A673 (cell line): ENCODE measurements at regions of chr3 and their contacts with region 1.

Region 1: GRCh38 chr3:128426128-128426921 is 40.4 kb downstream of the DNAJB8 start:
- DNase-seq: peak; percentile 58
- H3K4me3 ChIP-seq: no peak overlapping the region
- H3K27ac ChIP-seq: no peak overlapping the region
- H3K4me1 ChIP-seq: peaks cover 2% of the 10 kb centered on the region
- H3K27me3 ChIP-seq: no peaks in the 10 kb centered on the region
- CTCF ChIP-seq: peak; percentile 71

Region 2: DNA sequence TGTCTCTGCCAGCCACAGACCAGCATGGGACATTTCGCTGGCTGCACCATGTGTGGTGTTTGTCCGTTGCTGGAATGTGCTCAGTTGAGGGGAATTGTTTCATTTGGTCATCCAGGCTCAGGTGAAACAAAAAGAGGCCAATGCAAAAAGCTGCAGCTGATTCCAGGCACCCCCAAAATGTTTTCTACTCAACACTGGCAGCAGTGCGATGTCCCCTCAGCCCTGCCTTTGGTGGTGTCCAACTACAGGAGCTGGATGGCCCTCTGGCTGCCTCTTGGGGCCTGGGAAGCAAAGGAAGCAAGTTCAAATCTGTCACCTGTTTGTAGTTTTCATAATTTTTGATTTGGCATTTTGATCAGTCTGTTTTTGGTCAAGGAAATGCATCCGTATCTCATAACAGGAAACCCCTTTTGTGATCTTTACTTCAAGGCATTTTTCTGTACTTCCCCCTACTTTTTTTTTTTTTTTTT is 131.3 kb before region 1 on chr3:
- CTCF ChIA-PET with region 1: no interaction called
- POLR2A ChIA-PET with region 1: no interaction called
- intact Hi-C with region 1: no loop called
- DNase-seq: no peak
- H3K4me3 ChIP-seq: no peak overlapping the region
- H3K27ac ChIP-seq: no peak overlapping the region
- H3K4me1 ChIP-seq: peaks cover 9% of the 10 kb centered on the region
- H3K27me3 ChIP-seq: no peaks in the 10 kb centered on the region
- CTCF ChIP-seq: no peak

Region 3: GRCh38 chr3:128487813-128488635 is 61.7 kb after region 1 on chr3:
- CTCF ChIA-PET with region 1: interaction called, 3 read pairs
- POLR2A ChIA-PET with region 1: no interaction called
- intact Hi-C with region 1: loop called (anchors 5 kb)
- DNase-seq: peak; percentile 86
- H3K4me3 ChIP-seq: peak overlapping the region; percentile 81
- H3K27ac ChIP-seq: peak overlapping the region; percentile 60
- H3K4me1 ChIP-seq: peaks cover 19% of the 10 kb centered on the region
- H3K27me3 ChIP-seq: peaks cover 13% of the 10 kb centered on the region
- CTCF ChIP-seq: no peak

Region 4: DNA sequence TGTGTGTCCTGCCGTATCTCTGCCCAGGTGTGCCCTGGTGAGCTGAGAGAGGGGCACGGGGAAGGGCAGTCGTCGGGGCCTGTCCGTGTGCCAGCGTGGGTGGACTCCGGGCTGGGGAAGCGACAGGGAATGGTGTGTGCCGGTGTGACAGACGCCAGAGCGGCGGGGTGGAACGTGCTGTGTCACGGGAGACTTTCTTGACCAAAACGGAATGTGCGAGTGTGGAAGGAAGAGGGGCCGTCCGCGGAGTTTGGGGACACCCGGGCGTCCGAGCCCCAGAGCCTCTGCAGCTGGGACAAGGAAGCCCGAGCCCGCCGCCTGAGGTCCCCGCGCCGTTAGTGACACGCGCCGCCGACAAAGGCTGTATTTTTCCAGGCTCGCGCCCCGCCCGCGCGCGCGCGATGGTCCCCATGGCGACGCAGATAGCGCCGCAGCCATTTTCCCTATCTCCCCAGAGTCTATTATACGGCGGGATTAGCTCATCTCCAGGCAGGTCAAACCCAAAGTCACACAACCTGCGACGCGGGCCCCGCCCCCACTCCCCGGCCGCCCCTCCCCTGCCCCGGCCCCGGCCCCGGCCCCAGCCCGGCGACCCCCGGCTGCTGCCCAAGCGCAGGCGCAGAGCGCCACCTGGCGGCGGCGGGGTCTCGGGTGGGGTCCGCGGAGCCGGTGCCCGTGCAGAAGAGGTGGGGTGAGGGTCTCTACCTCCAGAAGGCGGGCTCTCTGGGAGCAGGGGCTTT is 71.2 kb after region 1 on chr3:
- CTCF ChIA-PET with region 1: interaction called, 9 read pairs
- POLR2A ChIA-PET with region 1: no interaction called
- intact Hi-C with region 1: loop called (anchors 2 kb)
- DNase-seq: peak; percentile 85
- H3K4me3 ChIP-seq: peak overlapping the region; percentile 52
- H3K27ac ChIP-seq: peak overlapping the region; percentile 73
- H3K4me1 ChIP-seq: no peaks in the 10 kb centered on the region
- H3K27me3 ChIP-seq: peaks cover under 1% of the 10 kb centered on the region
- CTCF ChIP-seq: peak; percentile 73

Region 5: GRCh38 chr3:128584412-128585020 is 158.2 kb after region 1 on chr3:
- CTCF ChIA-PET with region 1: interaction called, 3 read pairs
- POLR2A ChIA-PET with region 1: no interaction called
- intact Hi-C with region 1: loop called (anchors 2 kb)
- DNase-seq: peak; percentile 91
- H3K4me3 ChIP-seq: no peak overlapping the region
- H3K27ac ChIP-seq: no peak overlapping the region
- H3K4me1 ChIP-seq: peaks cover 2% of the 10 kb centered on the region
- H3K27me3 ChIP-seq: no peaks in the 10 kb centered on the region
- CTCF ChIP-seq: peak; percentile 92

Region 6: GRCh38 chr3:128725932-128726690 is 299.8 kb after region 1 on chr3 and contains the start of gene RAB7A:
- CTCF ChIA-PET with region 1: no interaction called
- POLR2A ChIA-PET with region 1: no interaction called
- intact Hi-C with region 1: no loop called
- DNase-seq: peak; percentile 99
- H3K4me3 ChIP-seq: peak within 1 kb of the TSS; percentile 99
- H3K27ac ChIP-seq: peak within 1 kb of the TSS; percentile 96
- H3K4me1 ChIP-seq: peaks cover 3% of the 10 kb centered on the region
- H3K27me3 ChIP-seq: no peaks in the 10 kb centered on the region
- CTCF ChIP-seq: no peak
- total RNA-seq, gene RAB7A: 245 and 258 TPM in 2 replicates